Activated T-helper 1 cell treated with anti-CD3 and anti-CD28 coated beads, Interleukin-12 subunit alpha, Interleukin-12 subunit beta, Interleukin-2, Interleukin-4 antibody, amounts not matched to agents 30 ng/mL and 10 ng/mL and 1 ng/mL, durations not matched to agents 14 hours and 24 hours and 36 hours (primary cell): ENCODE measurements at regions of chr4 and their contacts with region 1.

Region 1: GRCh38 chr4:101419324-101420135 is 72.2 kb upstream of the PPP3CA start:
- DNase-seq: no peak
- H3K4me3 Mint-ChIP-seq: peak overlapping the region; percentile 65
- H3K27ac Mint-ChIP-seq: peak overlapping the region; percentile 79
- H3K4me1 Mint-ChIP-seq: peaks cover 58% of the 10 kb centered on the region
- H3K27me3 Mint-ChIP-seq: peaks cover 11% of the 10 kb centered on the region

Region 2: DNA sequence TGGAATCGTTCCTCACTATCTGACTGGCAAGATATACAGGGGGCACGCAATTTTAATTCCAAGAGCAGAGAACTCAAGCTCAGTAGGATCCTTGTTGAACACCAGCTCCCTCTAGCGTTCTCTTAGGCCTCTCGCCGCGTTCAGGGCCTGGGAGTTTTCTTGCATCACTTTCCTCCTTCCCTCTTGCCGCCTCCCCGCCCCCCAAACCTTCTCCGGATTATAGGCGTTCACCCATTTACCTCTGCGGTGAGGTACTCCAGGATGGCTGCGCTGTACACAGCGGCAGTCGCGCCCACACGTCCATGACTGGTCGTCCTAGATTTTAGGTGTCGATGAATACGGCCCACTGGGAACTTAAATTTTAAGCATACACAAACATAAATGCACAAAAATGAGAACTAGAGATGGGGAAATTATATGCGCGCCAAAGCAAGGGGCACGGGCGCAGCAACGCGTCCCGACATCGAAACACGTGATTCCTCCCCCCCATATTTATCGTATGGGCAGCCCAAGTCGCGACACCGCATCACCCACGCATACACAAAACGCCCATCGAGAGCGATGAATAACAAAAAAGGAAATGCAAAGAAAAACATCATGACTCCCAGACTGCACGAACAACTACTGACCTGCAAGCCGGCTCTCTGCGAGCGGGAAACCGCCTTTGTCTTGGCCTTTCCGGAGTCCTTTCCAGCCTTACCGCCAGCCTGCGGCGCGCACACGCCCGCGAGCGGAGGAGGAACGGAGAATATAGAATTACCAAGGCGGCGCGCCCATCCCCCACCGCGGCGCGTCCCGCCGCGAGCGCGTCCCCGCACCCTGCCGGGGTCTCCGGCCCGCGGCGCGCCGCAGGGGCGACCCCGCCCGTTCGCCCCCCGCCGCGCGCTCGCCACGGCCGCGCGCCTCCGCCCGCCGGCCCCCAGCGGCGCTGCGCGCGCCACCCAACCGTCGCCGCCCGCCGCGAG is 1470.2 kb before region 1 on chr4:
- intact Hi-C with region 1: loop called (anchors 5 kb)
- DNase-seq: peak; percentile 82
- H3K4me3 Mint-ChIP-seq: no peak overlapping the region
- H3K27ac Mint-ChIP-seq: no peak overlapping the region
- H3K4me1 Mint-ChIP-seq: peaks cover 30% of the 10 kb centered on the region
- H3K27me3 Mint-ChIP-seq: no peaks in the 10 kb centered on the region

Region 3: GRCh38 chr4:100935090-100935489 is 484.4 kb before region 1 on chr4:
- intact Hi-C with region 1: no loop called
- DNase-seq: no peak
- H3K4me3 Mint-ChIP-seq: no peak overlapping the region
- H3K27ac Mint-ChIP-seq: no peak overlapping the region
- H3K4me1 Mint-ChIP-seq: peaks cover 12% of the 10 kb centered on the region
- H3K27me3 Mint-ChIP-seq: peaks cover 6% of the 10 kb centered on the region

Region 4: GRCh38 chr4:101103381-101104142 is 316.0 kb before region 1 on chr4:
- intact Hi-C with region 1: loop called (anchors 2 kb)
- DNase-seq: no peak
- H3K4me3 Mint-ChIP-seq: no peak overlapping the region
- H3K27ac Mint-ChIP-seq: no peak overlapping the region
- H3K4me1 Mint-ChIP-seq: peaks cover 18% of the 10 kb centered on the region
- H3K27me3 Mint-ChIP-seq: no peaks in the 10 kb centered on the region

Region 5: DNA sequence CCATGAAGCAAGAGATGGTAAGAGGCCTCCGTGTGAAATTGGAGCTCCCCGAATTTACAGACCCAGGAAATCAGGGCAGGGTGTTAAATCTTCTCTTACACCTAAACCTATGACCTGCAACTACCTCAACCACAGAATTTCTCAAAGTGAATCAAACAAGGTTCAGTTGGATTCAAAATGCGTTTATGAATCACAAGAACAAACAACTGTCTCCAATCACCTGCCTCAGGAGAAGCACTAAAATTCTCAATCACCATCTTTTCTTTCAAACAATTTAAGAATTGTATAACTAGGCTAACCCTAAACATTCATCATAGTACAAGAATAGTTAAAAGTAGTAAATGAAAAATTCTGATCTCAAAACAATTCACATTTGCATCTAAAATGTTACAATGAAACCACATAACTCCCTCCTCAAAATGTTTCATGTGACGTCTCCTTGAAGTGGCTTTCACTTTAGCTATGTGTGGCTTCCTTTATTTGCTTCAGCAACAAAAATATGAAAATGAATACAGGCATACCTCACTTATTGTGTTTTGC is 91.4 kb before region 1 on chr4:
- intact Hi-C with region 1: loop called (anchors 1 kb)
- DNase-seq: peak; percentile 21
- H3K4me3 Mint-ChIP-seq: peak overlapping the region; percentile 45
- H3K27ac Mint-ChIP-seq: peak overlapping the region; percentile 81
- H3K4me1 Mint-ChIP-seq: peaks cover 31% of the 10 kb centered on the region
- H3K27me3 Mint-ChIP-seq: peaks cover 24% of the 10 kb centered on the region

Region 6: DNA sequence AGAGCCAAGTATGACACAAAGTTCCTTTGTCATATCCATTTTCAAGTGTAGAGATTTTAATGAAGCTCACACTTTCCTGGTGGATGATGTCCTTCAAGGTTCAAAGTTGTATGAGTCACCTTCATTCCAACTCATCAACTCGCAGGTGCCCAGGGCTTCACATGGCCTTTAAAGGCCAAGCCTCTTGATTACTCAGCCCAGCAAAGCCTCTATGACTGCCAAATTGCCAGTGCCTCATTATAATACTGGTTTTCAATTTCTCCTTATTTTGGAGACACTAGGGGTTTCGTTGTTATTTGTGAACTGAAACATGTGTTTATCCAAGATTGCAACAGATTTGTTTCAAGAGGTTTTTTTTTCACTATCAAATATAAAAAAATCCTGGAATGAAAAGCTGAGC is 26.3 kb before region 1 on chr4:
- intact Hi-C with region 1: no loop called
- DNase-seq: no peak
- H3K4me3 Mint-ChIP-seq: no peak overlapping the region
- H3K27ac Mint-ChIP-seq: no peak overlapping the region
- H3K4me1 Mint-ChIP-seq: no peaks in the 10 kb centered on the region
- H3K27me3 Mint-ChIP-seq: peaks cover 15% of the 10 kb centered on the region

Region 7: DNA sequence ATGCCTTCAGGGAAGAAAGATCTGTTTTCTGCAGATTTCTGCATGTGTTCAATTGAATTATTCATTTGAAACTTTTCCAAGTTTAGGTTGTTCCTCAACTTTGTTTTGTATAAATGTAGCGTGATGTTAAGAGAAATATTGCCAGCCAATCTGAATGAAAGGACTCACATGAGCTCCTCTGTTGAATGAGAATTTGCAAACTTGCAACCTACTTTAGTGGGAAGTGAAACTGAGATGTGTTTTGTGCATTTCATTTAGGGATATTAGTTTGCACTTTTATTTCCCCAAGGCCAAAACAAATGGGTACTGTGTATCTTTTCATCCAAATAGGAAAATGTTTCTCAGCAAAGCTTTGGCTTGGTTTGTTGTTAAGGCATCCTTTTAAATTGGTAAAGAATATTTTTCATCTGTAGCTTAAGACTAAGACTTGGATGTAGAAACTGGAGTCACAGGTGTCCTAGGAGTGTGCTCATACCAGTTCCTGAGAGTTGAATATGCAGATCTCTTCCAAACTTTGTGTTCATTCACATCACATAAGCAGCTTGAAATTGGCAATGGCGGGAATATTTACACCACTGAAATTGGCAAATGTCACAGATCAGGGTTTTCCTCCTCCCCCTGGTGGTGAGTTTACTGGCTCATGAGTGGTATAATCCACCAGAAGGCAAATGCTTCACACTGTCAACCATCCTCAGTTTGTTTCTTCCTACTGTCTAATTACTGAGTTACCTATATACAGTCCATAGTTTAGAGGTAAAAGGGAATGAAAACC is 177.4 kb after region 1 on chr4:
- intact Hi-C with region 1: loop called (anchors 5 kb)
- DNase-seq: no peak
- H3K4me3 Mint-ChIP-seq: no peak overlapping the region
- H3K27ac Mint-ChIP-seq: no peak overlapping the region
- H3K4me1 Mint-ChIP-seq: peaks cover 12% of the 10 kb centered on the region
- H3K27me3 Mint-ChIP-seq: no peaks in the 10 kb centered on the region

Region 8: DNA sequence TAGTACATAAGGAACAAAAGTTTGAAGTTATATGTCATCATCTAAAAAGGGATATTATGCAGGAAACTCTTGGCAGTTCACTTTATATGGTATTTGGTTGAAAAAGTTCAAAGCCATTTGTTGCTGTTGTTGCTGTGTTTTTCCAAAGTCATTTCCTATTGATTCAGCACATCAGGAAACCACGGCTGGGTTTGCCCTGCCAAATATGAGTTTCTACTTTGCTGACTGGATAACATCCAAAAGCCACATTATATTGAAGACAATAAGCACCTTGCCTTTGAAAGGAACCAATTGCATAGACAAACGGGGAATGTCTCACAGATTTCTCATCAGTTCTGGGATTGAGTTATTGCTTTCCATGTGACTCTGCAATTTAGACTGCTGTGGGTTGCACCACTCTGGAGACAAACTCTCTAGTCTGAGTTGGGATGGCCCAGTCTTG is 719.6 kb after region 1 on chr4:
- intact Hi-C with region 1: no loop called
- DNase-seq: no peak
- H3K4me3 Mint-ChIP-seq: no peak overlapping the region
- H3K27ac Mint-ChIP-seq: no peak overlapping the region
- H3K4me1 Mint-ChIP-seq: no peaks in the 10 kb centered on the region
- H3K27me3 Mint-ChIP-seq: peaks cover 10% of the 10 kb centered on the region

Region 9: DNA sequence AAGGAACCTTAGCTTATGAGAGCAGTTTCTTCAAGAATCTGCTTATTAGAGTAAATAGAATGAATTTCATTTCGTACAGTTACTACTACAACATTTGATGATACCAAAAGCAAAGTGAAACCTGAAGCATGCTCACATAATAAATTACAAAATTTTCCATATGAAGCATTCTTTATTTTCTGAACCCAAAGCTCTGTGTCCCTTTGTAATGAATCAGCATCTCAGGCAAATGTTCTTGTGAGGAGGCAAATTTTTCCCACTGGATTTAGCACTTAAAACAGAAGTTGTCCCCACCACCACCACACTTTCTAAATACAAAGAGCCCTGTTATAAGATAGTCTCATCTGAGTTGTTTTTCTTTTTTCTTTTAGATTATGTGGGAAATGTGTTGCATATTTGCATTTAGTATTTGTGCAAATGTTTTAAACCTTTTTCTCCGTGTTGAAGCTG is 1011.0 kb after region 1 on chr4:
- intact Hi-C with region 1: loop called (anchors 5 kb)
- DNase-seq: no peak
- H3K4me3 Mint-ChIP-seq: peak overlapping the region; percentile 87
- H3K27ac Mint-ChIP-seq: peak overlapping the region; percentile 82
- H3K4me1 Mint-ChIP-seq: peaks cover 15% of the 10 kb centered on the region
- H3K27me3 Mint-ChIP-seq: peaks cover 5% of the 10 kb centered on the region